Mammary epithelial cell (primary cell): ENCODE measurements at regions of chrX and their contacts with region 1.

Region 1: DNA sequence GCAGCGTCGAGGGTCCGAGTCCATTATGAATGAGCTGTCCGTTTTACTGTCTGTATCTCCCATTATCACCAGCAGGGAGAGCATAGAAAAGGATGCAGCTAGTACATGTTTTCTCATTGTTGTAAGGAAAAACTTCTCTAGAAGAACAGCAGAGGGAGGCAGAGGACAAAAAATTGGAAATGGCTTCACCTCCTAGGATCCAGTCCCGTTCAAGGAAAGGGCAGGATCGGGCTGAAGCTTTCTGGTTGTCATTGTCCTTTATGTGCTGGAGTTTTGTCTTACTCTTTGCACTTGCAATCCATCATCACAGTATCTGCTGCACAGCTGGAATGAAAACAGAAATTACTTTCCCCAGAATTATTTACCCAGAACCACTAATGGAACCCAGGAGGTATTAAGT is 14.7 kb downstream of the NDP start:
- DNase-seq: peak; percentile 68
- H3K4me3 ChIP-seq: no peak overlapping the region
- H3K27ac ChIP-seq: no peak overlapping the region
- H3K4me1 ChIP-seq: no peaks in the 10 kb centered on the region
- H3K27me3 ChIP-seq: peaks cover 2% of the 10 kb centered on the region
- CTCF ChIP-seq: peak; percentile 77 to 79

Region 2: GRCh38 chrX:44025555-44025954 is 67.0 kb after region 1 on chrX:
- CTCF ChIA-PET with region 1: interaction called, 6 read pairs
- dilution Hi-C with region 1: no loop called
- in situ Hi-C with region 1: loop called in 1 of 2 experiments (anchors 10 kb)
- intact Hi-C with region 1: loop called (anchors 1 kb)
- DNase-seq: no peak
- H3K4me3 ChIP-seq: no peak overlapping the region
- H3K27ac ChIP-seq: no peak overlapping the region
- H3K4me1 ChIP-seq: no peaks in the 10 kb centered on the region
- H3K27me3 ChIP-seq: no peaks in the 10 kb centered on the region
- CTCF ChIP-seq: no peak

Region 3: GRCh38 chrX:44054863-44055601 is 96.5 kb after region 1 on chrX:
- CTCF ChIA-PET with region 1: no interaction called
- dilution Hi-C with region 1: no loop called
- in situ Hi-C with region 1: no loop called
- intact Hi-C with region 1: no loop called
- DNase-seq: no peak
- H3K4me3 ChIP-seq: no peak overlapping the region
- H3K27ac ChIP-seq: no peak overlapping the region
- H3K4me1 ChIP-seq: no peaks in the 10 kb centered on the region
- H3K27me3 ChIP-seq: peaks cover 5% of the 10 kb centered on the region
- CTCF ChIP-seq: no peak

Region 4: GRCh38 chrX:44244008-44244407 is 285.5 kb after region 1 on chrX:
- CTCF ChIA-PET with region 1: interaction called, 17 read pairs
- dilution Hi-C with region 1: no loop called
- in situ Hi-C with region 1: no loop called
- intact Hi-C with region 1: loop called (anchors 1 kb)
- DNase-seq: peak; percentile 26
- H3K4me3 ChIP-seq: no peak overlapping the region
- H3K27ac ChIP-seq: no peak overlapping the region
- H3K4me1 ChIP-seq: no peaks in the 10 kb centered on the region
- H3K27me3 ChIP-seq: peaks cover 13% of the 10 kb centered on the region
- CTCF ChIP-seq: peak; percentile 60 to 64

Region 5: GRCh38 chrX:44542567-44543325 is 584.2 kb after region 1 on chrX and contains the start of gene FUNDC1:
- CTCF ChIA-PET with region 1: no interaction called
- dilution Hi-C with region 1: no loop called
- in situ Hi-C with region 1: no loop called
- intact Hi-C with region 1: loop called (anchors 5 kb)
- DNase-seq: peak; percentile 91
- H3K4me3 ChIP-seq: peak within 1 kb of the TSS; percentile 63 to 81 (median 79)
- H3K27ac ChIP-seq: peak within 1 kb of the TSS; percentile 72
- H3K4me1 ChIP-seq: peaks cover 4% of the 10 kb centered on the region
- H3K27me3 ChIP-seq: no peaks in the 10 kb centered on the region
- CTCF ChIP-seq: peak in 1 of 2 donors; percentile 55
- total RNA-seq, gene FUNDC1: 14.5 to 16.4 TPM

Region 6: GRCh38 chrX:45186643-45187026 is 1228.1 kb after region 1 on chrX:
- CTCF ChIA-PET with region 1: no interaction called
- dilution Hi-C with region 1: no loop called
- in situ Hi-C with region 1: loop called in 1 of 2 experiments (anchors 25 kb)
- intact Hi-C with region 1: loop called (anchors 1 kb)
- DNase-seq: no peak
- H3K4me3 ChIP-seq: no peak overlapping the region
- H3K27ac ChIP-seq: no peak overlapping the region
- H3K4me1 ChIP-seq: no peaks in the 10 kb centered on the region
- H3K27me3 ChIP-seq: no peaks in the 10 kb centered on the region
- CTCF ChIP-seq: no peak